Endothelial cell of umbilical vein (primary cell): ENCODE measurements at regions of chr9 and their contacts with region 1.

Region 1: GRCh38 chr9:112717661-112718341 is at the start of gene INIP:
- DNase-seq: peak; percentile 98
- H3K4me3 ChIP-seq: peak within 1 kb of the TSS; percentile 57 to 92 (median 87)
- H3K27ac ChIP-seq: peak within 1 kb of the TSS; percentile 67
- H3K4me1 ChIP-seq: peaks cover 7% of the 10 kb centered on the region
- H3K27me3 ChIP-seq: no peaks in the 10 kb centered on the region
- CTCF ChIP-seq: no peak
- POLR2A ChIP-seq: peak; percentile 66
- total RNA-seq, gene INIP: 25.7 and 27.6 TPM in 2 replicates

Region 2: DNA sequence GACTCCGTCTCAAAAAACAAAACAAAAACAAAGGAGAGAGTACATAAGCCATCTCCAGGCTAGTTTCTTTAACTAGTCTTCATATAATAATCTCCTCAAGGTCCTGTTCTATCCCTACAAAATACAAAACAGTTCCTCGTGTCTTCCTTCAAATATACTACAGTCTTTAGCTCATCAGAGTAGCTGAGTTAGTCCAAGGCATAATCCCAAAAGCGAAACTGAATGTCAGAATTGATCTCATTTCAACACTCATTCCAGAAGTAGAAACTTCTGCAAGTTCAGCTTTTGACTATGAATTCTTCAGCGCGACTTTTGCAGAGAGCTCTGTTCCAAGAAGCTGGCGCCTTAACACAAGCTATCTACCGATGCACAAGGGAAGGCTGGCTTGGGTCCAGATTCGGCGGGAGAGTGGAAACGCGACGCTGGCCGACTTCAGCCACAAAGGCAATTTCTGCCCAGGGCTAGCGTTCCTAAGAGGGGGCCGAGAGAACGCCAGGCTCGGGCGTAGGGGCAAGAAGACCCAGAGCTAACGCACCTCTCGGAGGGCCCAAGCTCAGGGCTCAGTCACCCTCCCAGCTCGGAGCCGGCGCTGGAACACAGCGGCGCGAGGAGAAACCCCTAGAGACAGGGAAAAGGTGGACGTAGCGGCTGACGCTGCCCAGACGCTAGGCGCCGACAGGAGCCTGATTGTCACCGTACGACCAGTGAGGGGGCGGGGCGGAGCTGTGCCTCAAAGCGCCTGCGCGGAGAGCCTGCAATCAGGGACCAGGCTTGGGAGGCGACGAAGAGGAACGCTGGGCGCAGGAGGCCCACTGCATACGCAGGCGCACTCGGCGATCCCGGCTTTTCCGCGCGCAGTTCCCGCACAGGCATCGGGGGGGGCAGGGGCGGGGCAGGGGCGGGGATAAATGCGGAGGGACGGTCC is 338.4 kb before region 1 on chr9:
- CTCF ChIA-PET with region 1: interaction called, 3 read pairs
- POLR2A ChIA-PET with region 1: no interaction called
- dilution Hi-C with region 1: no loop called
- intact Hi-C with region 1: loop called (anchors 1 kb)
- DNase-seq: peak; percentile 99
- H3K4me3 ChIP-seq: peak overlapping the region; percentile 79 to 98 (median 87)
- H3K27ac ChIP-seq: peak overlapping the region; percentile 94
- H3K4me1 ChIP-seq: peaks cover 16% of the 10 kb centered on the region
- H3K27me3 ChIP-seq: no peaks in the 10 kb centered on the region
- CTCF ChIP-seq: peak in 1 of 2 donors; percentile 5
- POLR2A ChIP-seq: peak; percentile 96

Region 3: DNA sequence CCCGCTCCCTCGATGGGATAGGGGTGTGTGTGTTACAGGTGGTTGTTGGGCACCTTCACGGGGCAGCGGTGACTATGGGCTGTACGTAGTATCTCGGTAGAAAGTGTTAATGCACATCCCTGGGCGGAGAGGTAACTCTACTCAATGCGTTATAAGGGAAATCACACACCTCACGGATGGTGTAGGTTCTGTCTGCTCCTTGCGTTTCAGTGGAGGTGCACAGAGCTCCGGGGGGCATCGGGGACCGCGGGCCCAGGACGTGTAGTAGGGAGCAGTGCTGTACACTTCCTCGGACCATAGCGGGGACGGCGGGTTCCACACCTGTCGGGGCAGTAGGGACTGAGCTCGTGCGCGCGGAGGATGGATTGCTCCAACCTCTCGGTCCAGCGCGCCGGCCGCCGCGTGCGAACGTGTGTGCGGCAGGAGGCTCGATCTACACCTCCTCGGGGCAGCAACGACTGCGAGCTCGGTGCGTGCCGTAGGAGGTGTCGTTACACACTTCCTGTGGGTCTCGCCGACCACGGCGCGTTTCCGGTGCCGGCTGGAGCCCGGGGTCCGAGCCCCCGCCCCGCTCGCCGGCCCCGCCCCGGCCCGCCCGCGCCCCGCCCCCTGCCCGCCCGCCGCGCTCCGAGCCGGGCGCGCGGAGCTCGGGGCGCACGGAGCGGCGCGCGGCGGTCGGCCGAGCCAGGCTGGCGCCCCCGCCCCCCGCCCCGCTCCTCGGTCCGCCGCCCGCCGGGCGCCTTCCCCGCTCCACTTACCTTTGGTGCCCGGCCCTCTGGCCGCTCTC is 231.4 kb before region 1 on chr9 and contains the start of gene KIAA1958:
- CTCF ChIA-PET with region 1: interaction called, 3 read pairs
- POLR2A ChIA-PET with region 1: no interaction called
- dilution Hi-C with region 1: no loop called
- intact Hi-C with region 1: loop called (anchors 2 kb)
- DNase-seq: peak; percentile 58
- H3K4me3 ChIP-seq: peak within 1 kb of the TSS; percentile 45 to 65 (median 53)
- H3K27ac ChIP-seq: peak within 1 kb of the TSS; percentile 16
- H3K4me1 ChIP-seq: peaks cover 4% of the 10 kb centered on the region
- H3K27me3 ChIP-seq: no peaks in the 10 kb centered on the region
- CTCF ChIP-seq: no peak
- POLR2A ChIP-seq: peak; percentile 66
- total RNA-seq, gene KIAA1958: 5.0 and 5.2 TPM in 2 replicates

Region 4: DNA sequence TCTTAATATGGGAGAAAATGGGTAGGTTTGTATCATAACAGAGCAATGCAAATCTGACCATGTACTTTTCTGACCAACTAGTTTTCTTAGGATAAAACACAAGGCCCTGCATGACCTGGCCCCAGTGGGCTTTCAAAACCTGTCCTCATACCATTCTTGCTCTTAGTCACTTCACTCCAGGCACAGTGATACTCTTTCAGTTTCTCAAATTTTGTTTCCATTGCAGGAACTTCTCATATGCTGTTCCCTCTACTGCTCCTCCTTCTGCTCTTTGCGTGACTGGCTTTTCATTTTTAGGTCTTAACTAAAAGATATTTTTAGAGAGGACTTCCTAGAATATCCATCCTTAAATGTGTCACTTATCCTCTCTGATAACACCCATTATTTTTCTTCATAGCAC is 112.3 kb before region 1 on chr9:
- CTCF ChIA-PET with region 1: no interaction called
- POLR2A ChIA-PET with region 1: no interaction called
- dilution Hi-C with region 1: no loop called
- intact Hi-C with region 1: no loop called
- DNase-seq: no peak
- H3K4me3 ChIP-seq: no peak overlapping the region
- H3K27ac ChIP-seq: no peak overlapping the region
- H3K4me1 ChIP-seq: no peaks in the 10 kb centered on the region
- H3K27me3 ChIP-seq: no peaks in the 10 kb centered on the region
- CTCF ChIP-seq: no peak
- POLR2A ChIP-seq: no peak

Region 5: DNA sequence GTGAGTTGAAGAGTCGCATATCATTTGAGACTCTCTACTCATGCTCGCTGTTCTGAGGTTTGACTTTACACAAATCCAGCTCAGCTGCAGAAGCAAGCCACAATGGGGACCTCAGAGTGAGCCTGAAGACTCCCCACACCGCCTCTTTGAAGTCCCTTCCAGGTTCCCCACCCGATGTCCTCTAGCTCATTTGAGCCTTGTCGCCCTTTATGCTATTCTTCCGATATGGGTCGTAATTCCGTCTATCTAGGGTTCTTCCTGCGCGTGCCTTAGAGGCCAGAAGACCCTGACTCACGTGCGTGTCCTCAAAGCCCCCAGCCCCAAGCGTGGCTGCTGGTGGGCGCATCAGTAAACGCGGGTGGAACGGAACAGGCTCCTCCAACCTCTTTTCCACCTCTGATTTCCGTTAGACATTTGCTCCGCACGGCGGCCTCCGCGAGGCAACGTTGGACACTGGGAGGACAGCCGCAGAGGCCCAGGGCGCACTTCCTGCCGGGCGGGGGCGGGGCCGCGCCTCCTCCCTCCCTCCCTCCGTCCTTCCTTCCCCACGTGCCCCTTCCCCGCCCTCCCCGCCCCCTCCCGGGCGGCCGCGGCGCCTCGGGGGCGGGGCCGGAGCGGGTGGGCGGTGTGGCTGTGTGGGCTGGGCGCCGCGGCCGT is 32.4 kb after region 1 on chr9 and contains the start of gene SNX30:
- CTCF ChIA-PET with region 1: interaction called, 4 read pairs
- POLR2A ChIA-PET with region 1: interaction called, 7 read pairs
- dilution Hi-C with region 1: no loop called
- intact Hi-C with region 1: loop called (anchors 1 kb)
- DNase-seq: peak; percentile 81
- H3K4me3 ChIP-seq: peak within 1 kb of the TSS; percentile 47 to 98 (median 58)
- H3K27ac ChIP-seq: no peak within 1 kb of the TSS
- H3K4me1 ChIP-seq: peaks cover 10% of the 10 kb centered on the region
- H3K27me3 ChIP-seq: no peaks in the 10 kb centered on the region
- CTCF ChIP-seq: no peak
- POLR2A ChIP-seq: peak; percentile 85
- total RNA-seq, gene SNX30: 6.3 and 6.8 TPM in 2 replicates

Region 6: GRCh38 chr9:112793213-112793810 is 75.5 kb after region 1 on chr9:
- CTCF ChIA-PET with region 1: interaction called, 5 read pairs
- POLR2A ChIA-PET with region 1: no interaction called
- dilution Hi-C with region 1: no loop called
- intact Hi-C with region 1: loop called (anchors 5 kb)
- DNase-seq: peak; percentile 57
- H3K4me3 ChIP-seq: no peak overlapping the region
- H3K27ac ChIP-seq: no peak overlapping the region
- H3K4me1 ChIP-seq: no peaks in the 10 kb centered on the region
- H3K27me3 ChIP-seq: no peaks in the 10 kb centered on the region
- CTCF ChIP-seq: peak; percentile 67 to 80
- POLR2A ChIP-seq: no peak

Region 7: DNA sequence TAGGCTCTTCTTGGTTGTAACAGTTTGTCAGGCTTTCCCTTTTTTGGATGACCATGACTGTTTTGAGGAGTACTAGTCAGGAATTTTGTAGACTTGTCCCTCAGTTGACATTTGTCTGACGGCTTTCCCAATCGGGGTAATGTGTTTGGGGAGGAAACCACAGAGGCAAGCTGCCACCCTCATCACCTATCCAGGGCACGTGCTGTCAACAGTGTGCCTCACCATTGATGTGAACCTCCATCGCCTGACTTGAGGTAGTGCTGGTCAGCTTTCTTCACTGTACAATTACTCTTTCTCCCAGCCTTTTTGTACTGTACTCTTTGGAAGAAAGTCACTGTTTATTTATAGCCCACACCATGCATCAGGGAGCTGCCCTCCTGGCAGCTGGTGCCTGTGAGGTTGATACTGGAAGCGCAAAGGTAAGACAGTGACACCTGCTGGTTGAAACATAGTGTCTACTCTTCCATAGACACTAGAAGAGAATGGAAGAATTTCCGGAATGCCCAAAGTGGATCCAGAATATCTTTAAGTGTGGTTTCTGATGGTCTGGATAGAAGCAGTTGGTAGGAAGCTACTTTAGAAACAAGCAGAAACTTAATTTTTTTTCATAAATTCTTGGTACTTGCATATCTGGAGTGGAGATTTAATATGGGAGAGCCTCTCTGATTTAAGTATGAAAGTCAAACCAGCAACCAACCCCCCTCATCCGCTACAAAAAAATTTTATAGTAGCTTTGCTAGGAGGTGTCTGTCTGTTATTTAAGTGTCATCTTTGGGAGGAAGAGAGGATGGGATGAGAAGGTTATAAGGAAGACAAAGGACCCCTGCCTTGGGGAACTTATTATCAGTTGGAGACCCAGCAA is 102.1 kb after region 1 on chr9:
- CTCF ChIA-PET with region 1: interaction called, 6 read pairs
- POLR2A ChIA-PET with region 1: no interaction called
- dilution Hi-C with region 1: no loop called
- intact Hi-C with region 1: loop called (anchors 5 kb)
- DNase-seq: peak; percentile 50
- H3K4me3 ChIP-seq: no peak overlapping the region
- H3K27ac ChIP-seq: no peak overlapping the region
- H3K4me1 ChIP-seq: no peaks in the 10 kb centered on the region
- H3K27me3 ChIP-seq: no peaks in the 10 kb centered on the region
- CTCF ChIP-seq: peak; percentile 55 to 60
- POLR2A ChIP-seq: no peak